ENCODE measurements at regions of chr19 and their contacts with region 1.

Region 1: GRCh38 chr19:46825525-46825971 is 25.1 kb downstream of the AP2S1 start:
- DNase-seq: no peak
- ATAC-seq: no peak
- H3K4me3 ChIP-seq: no peak overlapping the region
- H3K27ac ChIP-seq: no peak overlapping the region
- H3K4me1 ChIP-seq: no peaks in the 10 kb centered on the region
- H3K27me3 ChIP-seq: no peaks in the 10 kb centered on the region
- CTCF ChIP-seq: no peak

Region 2: DNA sequence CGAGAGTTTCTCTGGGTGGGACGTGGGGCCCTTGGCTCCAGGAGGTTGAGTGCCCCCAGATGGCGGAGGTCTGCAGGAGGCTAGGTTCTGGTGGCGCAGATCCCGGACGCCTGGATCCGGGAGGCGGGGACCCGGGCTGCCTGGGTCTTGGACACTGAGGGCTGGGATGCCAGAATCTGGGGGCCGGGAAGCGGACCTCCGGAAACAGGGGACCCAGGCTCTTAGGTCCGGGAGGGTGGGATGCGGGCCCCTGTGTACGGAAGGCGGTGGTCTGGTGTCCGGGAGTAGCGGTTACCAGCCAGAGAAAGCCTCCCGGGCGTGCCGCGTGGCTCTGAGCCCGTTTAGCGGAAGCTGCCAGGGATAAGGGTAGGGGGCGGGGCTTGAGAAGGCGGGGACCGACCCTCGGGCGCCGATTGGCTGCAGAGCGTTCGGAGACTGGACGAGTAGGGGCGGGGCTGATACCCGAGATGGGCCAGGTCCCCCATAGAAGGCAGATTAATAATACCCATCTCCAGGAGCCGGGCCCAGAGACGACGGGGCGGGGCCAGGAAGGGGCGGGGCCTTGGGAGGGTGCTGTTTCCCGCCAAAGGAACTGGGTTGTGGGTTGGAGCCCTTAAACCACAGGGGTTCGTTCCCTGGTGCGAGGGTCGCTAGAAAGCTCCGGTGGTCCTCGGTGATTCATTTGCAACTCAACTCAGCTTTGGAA is 37.1 kb before region 1 on chr19 and contains the start of gene SLC1A5:
- intact Hi-C with region 1: loop called in 1 of 2 experiments (anchors 5 kb)
- DNase-seq: peak; percentile 96 to 97
- ATAC-seq: peak; percentile 88 to 92 (median 91)
- H3K4me3 ChIP-seq: peak within 1 kb of the TSS; percentile 67
- H3K27ac ChIP-seq: peak within 1 kb of the TSS; percentile 65
- H3K4me1 ChIP-seq: peaks cover 9% of the 10 kb centered on the region
- H3K27me3 ChIP-seq: peaks cover 0 to 21% (median 4%) of the 10 kb centered on the region in 3 donors
- CTCF ChIP-seq: no peak
- total RNA-seq, gene SLC1A5: 5.4 to 12.6 (median 8.2) TPM

Region 3: GRCh38 chr19:46850228-46851203 is 25.0 kb after region 1 on chr19 and contains the start of gene AP2S1:
- intact Hi-C with region 1: no loop called
- DNase-seq: peak; percentile 95 to 97
- ATAC-seq: peak; percentile 95 to 98 (median 96)
- H3K4me3 ChIP-seq: peak within 1 kb of the TSS; percentile 75
- H3K27ac ChIP-seq: peak within 1 kb of the TSS; percentile 79
- H3K4me1 ChIP-seq: peaks cover 17% of the 10 kb centered on the region
- H3K27me3 ChIP-seq: no peaks in the 10 kb centered on the region
- CTCF ChIP-seq: no peak
- total RNA-seq, gene AP2S1: 72.5 to 87.4 (median 85.9) TPM

Measured in psoas muscle (tissue), 8 donors.